Motor neuron (in vitro differentiated cells): ENCODE measurements at regions of chr2 and their contacts with region 1.

Region 1: DNA sequence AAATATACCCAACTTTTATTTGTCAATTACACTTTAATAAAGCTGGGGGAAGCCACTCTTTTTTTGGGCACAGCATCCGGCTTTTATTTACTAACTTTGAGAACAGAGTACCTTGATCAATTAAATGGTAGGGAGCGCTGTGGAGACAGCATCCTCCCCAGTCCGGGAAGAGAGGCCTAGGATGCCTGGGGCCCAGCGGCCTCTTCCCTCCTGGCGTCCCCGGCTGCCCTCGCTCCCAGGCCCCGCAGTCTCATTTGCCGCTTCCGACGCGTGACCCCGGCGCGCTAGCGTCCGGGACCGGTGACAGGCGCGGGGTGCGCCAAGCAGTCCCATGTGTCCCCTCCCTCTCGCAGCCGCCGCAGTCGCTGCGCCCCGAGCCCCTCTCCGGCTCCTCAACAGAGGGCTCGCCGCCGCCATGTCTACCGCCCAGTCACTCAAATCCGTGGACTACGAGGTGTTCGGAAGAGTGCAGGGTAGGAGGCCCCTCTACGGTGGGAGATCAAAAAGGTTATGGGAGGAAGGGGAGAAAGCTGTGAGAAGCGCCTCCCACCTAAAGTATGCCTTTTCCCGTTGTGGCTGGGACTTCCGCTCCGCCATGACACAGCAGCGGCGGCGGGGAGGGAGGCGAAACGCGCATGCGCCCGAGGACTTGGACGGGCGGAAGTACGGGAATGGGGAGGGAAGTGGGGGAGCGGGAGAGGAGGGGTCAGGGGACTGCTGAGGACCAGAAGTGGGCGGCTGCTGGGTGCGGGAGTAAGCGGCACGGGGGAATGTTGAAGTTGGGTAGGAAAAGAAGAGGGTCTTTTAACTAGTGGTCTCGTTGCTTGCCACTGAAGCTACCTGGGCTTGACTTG is at the start of gene ACYP2:
- ATAC-seq: peak; percentile 92 to 98 (median 96)
- H3K4me3 ChIP-seq: peak within 1 kb of the TSS; percentile 52 to 87 (median 54)
- H3K27ac ChIP-seq: peak within 1 kb of the TSS; percentile 98 to 99
- H3K4me1 ChIP-seq: peaks cover 6% of the 10 kb centered on the region in 2 donors
- total RNA-seq, gene ACYP2: 12.3 to 29.2 (median 20.3) TPM

Region 2: GRCh38 chr2:54371460-54372065 is 256.1 kb after region 1 on chr2:
- in situ Hi-C with region 1: no loop called
- ATAC-seq: no peak
- H3K4me3 ChIP-seq: no peak overlapping the region
- H3K27ac ChIP-seq: no peak overlapping the region
- H3K4me1 ChIP-seq: peaks cover 3 to 6% of the 10 kb centered on the region in 2 donors

Region 3: DNA sequence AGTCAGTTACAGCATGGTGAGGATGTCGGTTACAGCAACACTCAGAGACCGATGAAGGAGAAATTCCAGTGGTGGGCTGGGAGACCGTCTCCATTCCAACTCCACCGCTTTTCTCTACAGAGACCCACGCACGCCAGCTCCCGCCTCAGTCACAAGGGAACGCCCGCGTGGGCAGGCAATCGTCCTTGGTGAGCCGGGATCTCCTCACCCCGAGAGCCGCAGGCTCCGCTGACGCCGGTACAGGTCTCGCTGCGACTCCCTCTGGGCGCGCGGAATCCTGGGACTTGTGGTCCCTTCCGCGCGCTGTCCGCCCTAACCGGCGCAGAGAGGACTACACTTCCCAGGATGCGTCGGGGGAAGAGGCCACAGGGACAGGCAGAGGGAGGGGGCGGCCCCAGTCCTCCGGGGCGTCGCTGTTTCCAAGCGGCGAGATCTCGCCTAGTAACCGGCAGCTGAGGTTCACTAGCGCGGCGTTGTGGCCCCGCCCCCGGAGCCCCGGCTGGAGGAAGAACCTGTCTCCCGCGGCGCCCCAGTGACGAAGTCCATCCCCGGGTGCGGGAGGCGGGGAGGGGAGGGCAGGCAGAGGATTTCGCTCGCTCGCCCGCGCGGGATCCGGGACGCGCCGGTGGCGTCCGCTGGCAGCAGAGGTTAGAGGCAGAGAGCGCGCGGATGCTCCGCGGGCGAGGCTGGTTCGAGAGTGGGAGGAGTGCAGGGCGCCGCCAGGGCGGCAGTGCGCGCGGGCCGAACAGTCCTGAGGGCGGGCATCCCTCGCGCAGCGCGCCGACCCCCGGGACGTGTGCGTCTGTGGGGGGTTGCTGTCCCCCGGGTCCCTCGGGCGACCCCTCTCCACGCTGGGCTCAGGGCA is 607.9 kb after region 1 on chr2 and contains the start of gene EML6:
- in situ Hi-C with region 1: loop called in 5 of 9 experiments (anchors 25 kb)
- ATAC-seq: peak; percentile 92 to 97 (median 94)
- H3K4me3 ChIP-seq: peak within 1 kb of the TSS; percentile 51 to 78 (median 66)
- H3K27ac ChIP-seq: peak within 1 kb of the TSS; percentile 37 to 76
- H3K4me1 ChIP-seq: peaks cover 5 to 9% of the 10 kb centered on the region in 2 donors
- total RNA-seq, gene EML6: 2.9 to 23.2 (median 10.2) TPM